CD8-positive, alpha-beta T cell (primary cell): ENCODE measurements at regions of chr3 and their contacts with region 1.

Region 1: DNA sequence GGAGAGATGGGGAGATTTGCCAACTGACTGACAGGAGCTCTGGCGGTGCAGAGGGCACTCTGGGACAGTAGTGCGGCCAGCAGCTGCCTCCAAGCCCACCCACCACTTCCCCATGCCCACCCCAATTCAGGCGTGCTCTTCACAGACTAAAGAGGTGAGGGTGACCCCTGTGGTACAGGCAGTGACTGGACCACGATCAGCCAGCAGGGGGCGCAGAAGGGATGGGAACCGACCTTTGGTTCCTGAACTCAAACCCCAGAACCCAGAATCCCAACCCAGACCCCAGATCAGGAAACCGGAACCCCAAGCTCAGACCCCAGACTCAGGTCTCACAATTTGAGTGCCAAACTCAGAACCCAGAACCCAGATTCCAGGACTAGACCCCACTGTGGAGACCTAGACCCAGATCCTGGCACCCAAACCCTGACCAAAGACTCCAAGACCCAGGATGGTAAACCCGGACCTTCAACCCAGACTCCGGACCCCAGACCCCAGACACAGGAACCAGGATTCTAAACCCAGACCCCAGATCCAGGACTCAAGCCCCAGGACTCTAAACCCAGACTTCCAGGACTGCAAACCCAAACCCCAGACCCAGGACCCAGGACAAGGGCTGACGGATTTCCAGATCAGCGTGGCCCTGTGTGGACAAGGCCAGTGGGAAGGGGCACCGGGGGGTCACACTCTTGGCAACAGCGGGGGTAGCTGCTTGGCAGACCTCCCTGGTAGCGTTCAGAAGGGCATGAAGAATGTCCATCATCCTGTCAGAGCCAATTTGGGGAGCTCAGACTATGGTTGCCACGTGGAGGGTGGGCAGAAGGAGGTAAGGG is 3.7 kb upstream of the MYL3 start:
- DNase-seq: peak; percentile 57 to 93 (median 79)
- ATAC-seq: peak; percentile 80
- H3K4me3 ChIP-seq: no peak overlapping the region
- H3K4me3 Mint-ChIP-seq: no peak overlapping the region
- H3K27ac ChIP-seq: no peak overlapping the region
- H3K27ac Mint-ChIP-seq: no peak overlapping the region
- H3K4me1 ChIP-seq: no peaks in the 10 kb centered on the region
- H3K4me1 Mint-ChIP-seq: no peaks in the 10 kb centered on the region
- H3K27me3 ChIP-seq: no peaks in the 10 kb centered on the region
- H3K27me3 Mint-ChIP-seq: no peaks in the 10 kb centered on the region
- CTCF ChIP-seq: peak; percentile 75

Region 2: DNA sequence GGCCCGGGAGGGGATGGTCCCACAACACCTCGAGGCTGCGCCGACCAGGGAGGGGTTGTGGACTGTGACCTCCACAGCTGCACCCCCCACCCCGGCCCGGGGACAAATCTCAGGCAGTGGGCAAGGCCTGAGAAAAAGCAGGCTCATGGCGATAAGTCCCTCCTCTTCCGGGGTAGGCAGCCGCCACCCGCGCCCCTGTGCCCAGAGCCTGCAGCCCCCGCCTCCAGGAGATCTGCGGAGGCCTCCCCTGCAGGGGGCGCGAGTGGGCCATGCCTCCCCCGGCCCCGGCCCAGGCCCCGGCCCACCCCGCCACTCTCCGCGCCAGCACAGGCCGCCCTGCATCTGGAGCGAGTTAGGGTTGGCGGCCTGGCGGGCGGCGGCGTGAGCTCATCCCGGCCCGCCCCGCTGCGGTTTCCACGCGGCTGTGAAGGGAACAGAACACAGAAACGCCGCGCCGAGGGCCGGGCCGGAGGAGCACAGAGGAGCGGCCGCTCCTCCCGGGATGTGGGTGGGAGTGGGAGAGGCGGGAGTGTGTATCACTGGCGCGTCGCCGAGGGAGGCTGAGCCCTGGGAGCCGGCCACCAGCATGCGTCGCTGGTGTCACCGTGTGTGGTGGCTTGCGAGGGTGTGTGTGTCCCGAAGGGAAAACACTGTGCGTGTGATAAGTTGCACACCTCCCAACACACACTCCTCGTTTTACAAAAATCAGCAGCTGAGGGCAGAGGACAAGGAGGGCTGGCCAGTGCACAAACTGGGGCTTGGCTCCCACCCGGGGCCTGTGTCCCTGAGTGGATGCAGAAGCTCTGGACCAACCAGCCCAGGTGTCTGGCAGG is 20.9 kb before region 1 on chr3:
- CTCF ChIA-PET with region 1: interaction called, 21 read pairs
- POLR2A ChIA-PET with region 1: no interaction called
- intact Hi-C with region 1: no loop called
- DNase-seq: peak; percentile 55 to 86 (median 79)
- ATAC-seq: peak; percentile 95
- H3K4me3 ChIP-seq: peak overlapping the region; percentile 64 to 82
- H3K4me3 Mint-ChIP-seq: peak overlapping the region; percentile 85
- H3K27ac ChIP-seq: peak overlapping the region; percentile 32 to 36
- H3K27ac Mint-ChIP-seq: peak overlapping the region; percentile 55
- H3K4me1 ChIP-seq: peaks cover 10% of the 10 kb centered on the region
- H3K4me1 Mint-ChIP-seq: peaks cover 11% of the 10 kb centered on the region
- H3K27me3 ChIP-seq: no peaks in the 10 kb centered on the region
- H3K27me3 Mint-ChIP-seq: no peaks in the 10 kb centered on the region
- CTCF ChIP-seq: peak; percentile 68

Region 3: GRCh38 chr3:46882377-46883053 is 15.6 kb after region 1 on chr3:
- CTCF ChIA-PET with region 1: interaction called, 10 read pairs
- POLR2A ChIA-PET with region 1: interaction called, 3 read pairs
- intact Hi-C with region 1: no loop called
- DNase-seq: no peak
- ATAC-seq: peak; percentile 26
- H3K4me3 ChIP-seq: peak overlapping the region; percentile 38 to 43
- H3K4me3 Mint-ChIP-seq: peak overlapping the region; percentile 76
- H3K27ac ChIP-seq: no peak overlapping the region
- H3K27ac Mint-ChIP-seq: no peak overlapping the region
- H3K4me1 ChIP-seq: no peaks in the 10 kb centered on the region
- H3K4me1 Mint-ChIP-seq: peaks cover 13% of the 10 kb centered on the region
- H3K27me3 ChIP-seq: peaks cover 18 to 19% of the 10 kb centered on the region in 2 experiments
- H3K27me3 Mint-ChIP-seq: peaks cover 34% of the 10 kb centered on the region
- CTCF ChIP-seq: no peak

Region 4: GRCh38 chr3:46909535-46910442 is 42.9 kb after region 1 on chr3:
- CTCF ChIA-PET with region 1: interaction called, 23 read pairs
- POLR2A ChIA-PET with region 1: no interaction called
- intact Hi-C with region 1: loop called (anchors 1 kb)
- DNase-seq: peak; percentile 65 to 84 (median 81)
- ATAC-seq: peak; percentile 89
- H3K4me3 ChIP-seq: no peak overlapping the region
- H3K4me3 Mint-ChIP-seq: no peak overlapping the region
- H3K27ac ChIP-seq: no peak overlapping the region
- H3K27ac Mint-ChIP-seq: no peak overlapping the region
- H3K4me1 ChIP-seq: peaks cover 17% of the 10 kb centered on the region
- H3K4me1 Mint-ChIP-seq: peaks cover 18% of the 10 kb centered on the region
- H3K27me3 ChIP-seq: no peaks in the 10 kb centered on the region
- H3K27me3 Mint-ChIP-seq: no peaks in the 10 kb centered on the region
- CTCF ChIP-seq: peak; percentile 91

Region 5: GRCh38 chr3:47347217-47347801 is 480.4 kb after region 1 on chr3:
- CTCF ChIA-PET with region 1: no interaction called
- POLR2A ChIA-PET with region 1: no interaction called
- intact Hi-C with region 1: no loop called
- DNase-seq: no peak
- ATAC-seq: no peak
- H3K4me3 ChIP-seq: no peak overlapping the region
- H3K4me3 Mint-ChIP-seq: no peak overlapping the region
- H3K27ac ChIP-seq: no peak overlapping the region
- H3K27ac Mint-ChIP-seq: peak overlapping the region; percentile 64
- H3K4me1 ChIP-seq: no peaks in the 10 kb centered on the region
- H3K4me1 Mint-ChIP-seq: peaks cover 7% of the 10 kb centered on the region
- H3K27me3 ChIP-seq: no peaks in the 10 kb centered on the region
- H3K27me3 Mint-ChIP-seq: no peaks in the 10 kb centered on the region
- CTCF ChIP-seq: no peak

Region 6: DNA sequence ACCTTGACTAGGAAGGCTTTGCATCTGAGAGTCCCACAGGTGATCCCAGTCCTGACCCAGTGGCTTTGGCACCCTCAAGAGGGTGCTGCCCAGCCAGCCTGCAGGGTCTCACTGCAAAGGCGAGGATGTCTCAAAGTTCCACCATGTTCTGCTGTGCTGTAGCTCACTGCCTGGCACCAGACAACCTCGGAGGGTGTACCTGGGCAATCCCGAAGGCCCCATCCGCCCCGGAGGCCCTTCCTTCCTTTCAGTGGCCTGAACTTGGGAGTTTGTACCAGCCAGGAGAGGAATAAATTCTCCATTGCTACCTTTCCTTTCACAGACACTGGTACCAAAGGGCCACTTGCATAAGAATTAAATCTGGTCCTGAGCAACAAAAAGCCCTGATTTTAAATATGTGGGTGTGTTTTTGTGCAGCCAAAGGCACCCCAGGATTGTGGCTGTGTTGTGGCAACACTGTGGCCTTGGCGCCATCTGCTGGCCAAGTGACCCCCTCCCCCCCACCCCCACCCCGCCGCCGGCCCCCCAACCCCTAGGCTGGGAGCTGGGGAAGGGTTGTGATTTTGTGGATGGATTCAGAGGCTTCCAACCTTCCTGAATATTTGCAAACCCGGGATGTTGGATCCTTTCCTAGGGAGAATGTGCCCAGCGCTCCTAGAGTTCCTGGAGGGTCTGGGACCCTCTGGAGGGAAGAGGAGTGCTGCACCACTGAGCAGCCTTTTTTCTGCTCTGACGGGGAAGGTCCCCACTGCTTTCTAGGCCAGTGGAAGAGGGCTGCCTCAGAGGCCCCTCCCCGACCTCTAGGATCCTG is 504.2 kb after region 1 on chr3:
- CTCF ChIA-PET with region 1: interaction called, 6 read pairs
- POLR2A ChIA-PET with region 1: no interaction called
- intact Hi-C with region 1: loop called in 1 of 2 experiments (anchors 2 kb)
- DNase-seq: peak in 6 of 9 experiments; percentile 33 to 53 (median 39)
- ATAC-seq: no peak
- H3K4me3 ChIP-seq: no peak overlapping the region
- H3K4me3 Mint-ChIP-seq: no peak overlapping the region
- H3K27ac ChIP-seq: no peak overlapping the region
- H3K27ac Mint-ChIP-seq: no peak overlapping the region
- H3K4me1 ChIP-seq: no peaks in the 10 kb centered on the region
- H3K4me1 Mint-ChIP-seq: no peaks in the 10 kb centered on the region
- H3K27me3 ChIP-seq: peaks cover 0 to 5% of the 10 kb centered on the region in 2 experiments
- H3K27me3 Mint-ChIP-seq: peaks cover 10% of the 10 kb centered on the region
- CTCF ChIP-seq: peak; percentile 46